KBM-7 (cell line): ENCODE measurements at regions of chr7 and their contacts with region 1.

Region 1: DNA sequence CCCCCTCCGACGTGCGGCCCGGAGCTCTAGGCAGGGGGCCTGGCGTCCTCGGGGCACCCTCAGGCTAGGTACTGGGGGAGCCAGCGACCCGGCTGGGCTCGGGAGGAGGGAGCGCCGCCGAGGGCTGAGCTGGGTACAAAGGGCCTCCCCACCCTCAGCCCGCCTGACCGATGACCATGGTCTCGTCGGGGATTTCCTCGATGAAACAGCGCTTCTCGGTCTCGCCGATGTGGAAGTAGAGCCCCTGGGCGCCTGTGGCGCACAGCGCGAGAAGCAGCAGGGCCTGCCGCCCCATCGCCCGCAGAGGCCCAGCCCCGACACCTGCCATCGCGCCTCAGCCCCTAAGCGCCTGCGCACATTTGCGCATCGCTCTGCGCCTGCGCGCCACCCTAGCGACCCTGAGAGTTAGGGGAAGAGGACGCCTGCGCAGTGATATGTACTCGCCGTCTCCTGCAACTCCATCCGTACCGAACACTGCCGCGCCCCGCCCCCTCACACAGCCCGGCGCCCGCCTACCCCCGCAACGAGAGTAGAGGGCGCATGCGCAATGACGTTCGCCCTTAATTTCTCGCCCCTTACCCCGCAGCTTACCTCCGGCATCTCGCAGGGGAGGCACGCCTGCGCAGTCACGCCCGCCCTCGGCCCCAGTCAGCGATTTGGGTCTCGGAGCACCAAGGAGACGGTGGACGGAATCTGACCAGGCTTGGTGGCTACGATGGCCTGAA is at the start of gene TMED4:
- DNase-seq: peak; percentile 99

Region 2: GRCh38 chr7:44936322-44936721 is 354.3 kb after region 1 on chr7:
- in situ Hi-C with region 1: loop called (anchors 25 kb)
- DNase-seq: no peak

Region 3: DNA sequence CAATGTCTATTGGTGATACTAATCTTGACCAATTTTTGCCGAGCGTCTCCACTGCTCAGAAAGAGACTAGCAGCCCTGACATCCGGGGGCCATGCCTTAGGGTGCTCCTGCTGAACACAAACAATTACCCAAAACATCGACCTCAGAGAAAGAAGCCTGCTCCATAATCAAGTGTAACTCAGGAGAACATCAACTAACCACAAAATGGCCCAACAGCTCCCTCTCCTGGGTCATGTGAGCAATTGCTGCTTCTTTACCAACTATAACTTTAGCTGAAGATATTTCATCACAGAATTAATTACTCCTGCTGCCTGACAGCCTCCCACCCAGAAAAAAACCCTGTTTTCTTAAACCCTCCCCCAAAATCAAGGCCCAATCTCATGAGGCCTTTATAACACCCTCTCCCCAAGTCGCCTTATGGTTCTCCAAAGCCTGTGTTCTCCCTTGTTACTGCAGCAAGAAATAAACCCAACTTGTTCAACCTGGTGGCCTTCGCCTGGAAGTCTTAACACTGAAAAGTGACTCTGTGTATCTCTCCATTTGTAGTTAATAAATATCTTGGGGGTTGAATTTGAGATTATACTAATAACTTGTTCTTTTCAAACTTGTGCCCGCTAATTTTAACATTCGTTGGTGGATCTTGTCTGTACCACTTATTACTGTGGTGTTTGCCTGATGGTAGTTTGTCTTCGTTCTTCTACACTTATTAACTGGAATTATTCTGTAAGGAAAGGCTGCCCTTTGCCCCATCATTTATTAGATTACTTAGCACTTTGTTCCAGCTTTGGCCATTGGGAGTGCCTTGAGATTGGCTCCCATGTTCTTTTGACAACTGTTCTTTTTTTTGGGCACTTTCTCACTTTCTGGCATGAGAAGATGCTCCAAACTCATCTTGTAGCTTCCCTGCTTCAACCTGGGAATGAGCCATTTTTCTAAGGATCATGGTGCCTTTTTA is 554.3 kb after region 1 on chr7:
- in situ Hi-C with region 1: loop called (anchors 25 kb)
- DNase-seq: peak; percentile 72